ENCODE measurements at regions of chr16 and their contacts with region 1.

Region 1: DNA sequence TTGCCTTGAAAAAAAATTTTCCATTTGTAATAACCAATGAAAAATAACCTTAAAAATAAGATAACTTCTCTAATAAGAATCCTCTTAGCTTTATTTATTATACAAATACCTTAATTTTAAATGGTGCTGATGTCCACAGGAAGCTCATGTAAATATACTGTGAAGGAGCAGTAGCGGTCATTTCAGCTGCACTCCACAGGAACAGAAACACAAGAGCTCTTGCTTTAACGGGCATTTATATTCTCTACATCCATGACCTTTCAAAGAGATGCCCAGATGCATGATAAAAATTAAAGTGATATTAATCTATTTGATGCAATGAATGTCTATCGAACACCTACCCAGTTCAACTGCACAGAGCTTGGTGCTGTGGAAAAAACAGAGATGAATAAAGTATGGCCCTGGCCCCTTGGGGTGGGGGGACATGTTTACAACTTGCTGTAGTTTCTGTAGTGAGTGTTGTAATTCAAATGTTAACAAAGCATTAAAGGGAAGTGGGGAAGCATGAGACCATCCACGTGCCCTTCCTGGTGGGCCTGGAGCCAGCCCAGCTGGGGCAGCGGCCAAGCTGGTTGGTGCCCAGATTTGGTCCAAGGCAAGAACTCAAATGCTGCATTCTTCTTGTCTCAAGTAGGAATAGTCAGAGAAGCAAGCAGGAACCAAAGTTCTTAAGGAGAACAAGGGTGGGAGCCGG is 47.9 kb downstream of the IQCK start:
- DNase-seq: peak; percentile 80
- ATAC-seq: peak; percentile 85

Region 2: GRCh38 chr16:19879241-19879792 is 113.3 kb after region 1 on chr16:
- intact Hi-C with region 1: loop called (anchors 10 kb)
- DNase-seq: no peak
- ATAC-seq: peak; percentile 17

Measured in Right ventricle myocardium superior (tissue), 1 donor.